ENCODE measurements at regions of chr2 and their contacts with region 1.

Region 1: DNA sequence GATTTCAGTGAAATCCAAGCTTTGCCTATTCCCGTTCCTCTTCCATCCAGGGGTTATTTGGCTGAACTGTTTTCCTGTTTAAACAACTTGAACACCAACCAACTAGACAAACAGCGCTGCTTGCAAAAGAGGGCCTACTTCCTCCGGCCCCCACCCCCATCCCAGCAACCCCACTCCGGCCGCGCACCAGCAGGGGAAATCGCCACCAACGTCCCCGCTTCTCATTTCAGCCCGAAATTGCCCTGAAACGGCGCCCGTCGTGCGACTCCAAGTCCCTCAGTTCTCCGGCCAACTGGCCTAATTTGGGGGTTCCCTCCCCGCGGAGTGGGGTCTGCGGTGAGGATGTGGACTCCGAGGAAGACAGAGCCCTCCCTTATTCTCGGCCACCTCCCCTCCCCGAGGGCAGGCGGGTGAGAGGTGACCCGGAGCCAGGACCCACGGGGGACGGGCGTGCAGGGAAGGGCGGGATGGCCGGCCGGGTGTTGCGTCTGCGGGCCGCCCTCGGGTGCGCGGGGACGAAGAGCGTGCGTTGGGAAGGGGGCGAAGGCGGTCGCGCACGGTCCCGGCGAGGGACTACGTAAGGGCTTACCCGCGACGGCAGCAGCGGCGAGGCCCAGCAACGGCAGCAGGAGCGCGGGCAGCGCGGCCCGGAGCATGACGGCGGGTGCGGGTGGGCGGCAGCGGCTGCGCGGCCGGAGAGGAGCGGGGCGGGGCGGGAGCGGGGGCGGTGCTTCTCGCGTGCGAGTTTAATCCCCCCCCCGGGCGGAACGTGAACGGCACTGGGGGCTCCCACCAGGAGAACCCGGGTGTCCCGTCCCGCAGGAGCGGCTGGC is at the start of gene CD302:
- DNase-seq: peak in 6 of 9 donors; percentile 6 to 51 (median 18)
- ATAC-seq: peak; percentile 68
- H3K4me3 ChIP-seq: peak within 1 kb of the TSS; percentile 28
- H3K4me3 Mint-ChIP-seq: peak within 1 kb of the TSS; percentile 67 to 86 (median 80)
- H3K27ac ChIP-seq: no peak within 1 kb of the TSS
- H3K27ac Mint-ChIP-seq: peak within 1 kb of the TSS in 3 of 9 donors; percentile 7 to 75 (median 56)
- H3K4me1 ChIP-seq: peaks cover 0 to 11% of the 10 kb centered on the region in 2 donors
- H3K4me1 Mint-ChIP-seq: peaks cover 5 to 25% (median 20%) of the 10 kb centered on the region in 7 donors
- H3K27me3 ChIP-seq: no peaks in the 10 kb centered on the region
- H3K27me3 Mint-ChIP-seq: peaks cover 9 to 61% (median 11%) of the 10 kb centered on the region in 5 donors
- total RNA-seq, gene CD302: 0.63 to 30.5 (median 1.3) TPM

Region 2: GRCh38 chr2:159615140-159615951 is 182.4 kb before region 1 on chr2:
- CTCF ChIA-PET with region 1: no interaction called
- POLR2A ChIA-PET with region 1: no interaction called
- intact Hi-C with region 1: loop called in 1 of 2 experiments (anchors 10 kb)
- DNase-seq: peak in 8 of 9 donors; percentile 7 to 51 (median 22)
- ATAC-seq: peak; percentile 78
- H3K4me3 ChIP-seq: peak overlapping the region; percentile 58
- H3K4me3 Mint-ChIP-seq: peak overlapping the region; percentile 81 to 99 (median 89)
- H3K27ac ChIP-seq: peak overlapping the region; percentile 30
- H3K27ac Mint-ChIP-seq: peak overlapping the region in 2 of 9 donors; percentile 32 to 57
- H3K4me1 ChIP-seq: peaks cover 4 to 5% of the 10 kb centered on the region in 2 donors
- H3K4me1 Mint-ChIP-seq: peaks cover 10 to 18% (median 15%) of the 10 kb centered on the region in 7 donors
- H3K27me3 ChIP-seq: peaks cover 3% of the 10 kb centered on the region in 2 donors
- H3K27me3 Mint-ChIP-seq: peaks cover 17 to 50% (median 41%) of the 10 kb centered on the region in 5 donors